ENCODE measurements at regions of chr9 and their contacts with region 1.

Region 1: DNA sequence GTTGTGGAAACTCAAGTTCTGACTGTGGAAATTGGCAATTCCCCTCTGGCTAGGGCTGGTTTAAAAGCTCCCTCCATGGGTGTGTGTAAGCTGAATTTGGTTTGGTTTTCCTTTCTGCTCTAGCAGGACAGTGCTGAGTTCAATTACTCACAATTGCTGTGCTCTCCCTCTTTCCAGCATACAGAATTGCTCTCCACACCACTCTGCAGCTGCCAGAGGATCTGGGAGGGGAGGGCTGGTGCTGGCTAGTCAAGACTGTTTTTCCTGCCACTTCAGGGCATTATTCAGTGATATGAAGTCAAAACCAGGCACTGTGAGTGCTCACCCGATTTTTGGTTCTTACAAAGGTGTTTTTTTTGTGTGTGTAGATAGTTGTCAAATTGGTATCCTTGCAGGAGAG is 336.9 kb upstream of the SLC24A2 start:
- DNase-seq: no peak
- H3K4me3 Mint-ChIP-seq: no peak overlapping the region
- H3K27ac Mint-ChIP-seq: no peak overlapping the region
- H3K4me1 Mint-ChIP-seq: peaks cover 6% of the 10 kb centered on the region
- H3K27me3 Mint-ChIP-seq: no peaks in the 10 kb centered on the region

Region 2: DNA sequence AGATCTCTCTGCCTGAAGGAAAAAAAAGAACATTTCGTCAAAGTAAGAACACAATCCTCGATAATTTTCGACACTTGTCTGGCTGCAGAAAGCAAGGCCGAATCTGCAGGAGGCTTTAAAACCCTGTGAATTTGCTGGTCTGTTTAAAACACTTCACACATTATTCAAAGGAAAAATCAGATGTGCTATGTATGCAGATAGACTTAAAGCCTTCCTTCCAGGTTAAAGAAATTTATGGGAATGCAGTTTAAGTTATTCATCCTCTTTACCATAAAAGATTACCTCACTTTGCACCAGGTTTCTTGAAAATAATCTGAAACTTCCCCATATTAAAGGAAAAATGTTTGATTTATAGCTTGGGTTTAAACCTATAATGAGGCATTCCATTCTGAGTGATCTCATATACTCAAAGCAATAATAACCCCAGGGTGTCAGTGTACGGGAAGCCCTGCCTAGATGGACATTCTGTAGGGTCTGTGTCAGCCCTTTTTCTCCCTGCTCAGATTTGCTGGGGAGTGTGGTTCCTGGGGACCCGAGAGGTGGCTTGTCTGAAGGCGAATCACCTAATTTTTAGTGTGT is 13.4 kb before region 1 on chr9:
- CTCF ChIA-PET with region 1: no interaction called
- intact Hi-C with region 1: loop called (anchors 2 kb)
- DNase-seq: no peak
- H3K4me3 Mint-ChIP-seq: no peak overlapping the region
- H3K27ac Mint-ChIP-seq: no peak overlapping the region
- H3K4me1 Mint-ChIP-seq: no peaks in the 10 kb centered on the region
- H3K27me3 Mint-ChIP-seq: no peaks in the 10 kb centered on the region

Region 3: GRCh38 chr9:20262611-20263010 is 136.9 kb after region 1 on chr9:
- CTCF ChIA-PET with region 1: no interaction called
- intact Hi-C with region 1: no loop called
- DNase-seq: no peak
- H3K4me3 Mint-ChIP-seq: no peak overlapping the region
- H3K27ac Mint-ChIP-seq: no peak overlapping the region
- H3K4me1 Mint-ChIP-seq: peaks cover 2% of the 10 kb centered on the region
- H3K27me3 Mint-ChIP-seq: no peaks in the 10 kb centered on the region

Measured in activated naive CD4-positive, alpha-beta T cell treated with anti-CD3 and anti-CD28 coated beads for 36 hours (primary cell).